Left ventricle myocardium inferior (tissue), 1 donor: ENCODE measurements at regions of chr2 and their contacts with region 1.

Region 1: DNA sequence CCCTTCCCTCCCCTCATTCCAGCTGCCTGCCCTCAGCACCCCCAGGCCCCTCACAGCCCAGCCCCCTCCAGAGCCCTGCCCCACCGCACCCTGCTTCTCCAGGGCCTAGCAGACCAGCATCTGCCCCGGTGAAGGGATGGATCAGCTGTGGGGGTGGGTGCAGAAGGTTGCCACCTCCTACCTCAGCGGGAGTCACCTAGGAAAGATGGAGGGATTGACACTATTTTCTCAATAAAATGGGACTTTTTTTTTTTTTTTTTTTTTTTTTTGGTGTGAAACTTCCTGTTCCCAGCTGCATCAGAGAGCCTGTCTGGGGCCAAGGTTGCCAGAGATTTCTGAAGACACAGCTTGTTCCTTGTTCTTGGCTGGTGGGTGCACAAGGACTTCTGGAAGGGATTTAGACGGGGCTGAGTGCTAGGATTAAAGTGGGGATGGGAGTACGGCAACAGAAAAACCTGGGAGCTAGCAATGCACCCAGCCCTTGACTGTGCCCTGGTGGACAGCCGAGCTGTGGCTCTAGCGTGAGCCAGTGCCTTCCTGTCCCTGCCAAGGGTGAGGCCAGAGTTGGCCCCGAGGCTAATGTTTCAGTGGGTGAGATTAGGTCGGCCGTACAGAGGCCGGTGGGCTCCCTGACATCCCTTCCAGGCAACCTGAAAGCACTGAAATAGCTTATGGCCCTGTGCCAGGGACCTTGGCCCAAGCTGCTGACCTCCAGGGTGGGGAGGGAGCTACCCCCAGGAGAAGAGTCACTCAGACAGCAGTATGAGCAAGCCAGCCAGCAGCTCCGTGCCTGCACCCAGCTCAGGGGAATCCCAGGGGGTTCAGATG is 4.6 kb downstream of the B3GNT7 start:
- DNase-seq: peak; percentile 58
- H3K4me3 ChIP-seq: peak overlapping the region; percentile 23
- H3K27ac ChIP-seq: peak overlapping the region; percentile 80
- H3K4me1 ChIP-seq: peaks cover 43% of the 10 kb centered on the region
- H3K27me3 ChIP-seq: peaks cover 16% of the 10 kb centered on the region
- CTCF ChIP-seq: peak; percentile 55

Region 2: DNA sequence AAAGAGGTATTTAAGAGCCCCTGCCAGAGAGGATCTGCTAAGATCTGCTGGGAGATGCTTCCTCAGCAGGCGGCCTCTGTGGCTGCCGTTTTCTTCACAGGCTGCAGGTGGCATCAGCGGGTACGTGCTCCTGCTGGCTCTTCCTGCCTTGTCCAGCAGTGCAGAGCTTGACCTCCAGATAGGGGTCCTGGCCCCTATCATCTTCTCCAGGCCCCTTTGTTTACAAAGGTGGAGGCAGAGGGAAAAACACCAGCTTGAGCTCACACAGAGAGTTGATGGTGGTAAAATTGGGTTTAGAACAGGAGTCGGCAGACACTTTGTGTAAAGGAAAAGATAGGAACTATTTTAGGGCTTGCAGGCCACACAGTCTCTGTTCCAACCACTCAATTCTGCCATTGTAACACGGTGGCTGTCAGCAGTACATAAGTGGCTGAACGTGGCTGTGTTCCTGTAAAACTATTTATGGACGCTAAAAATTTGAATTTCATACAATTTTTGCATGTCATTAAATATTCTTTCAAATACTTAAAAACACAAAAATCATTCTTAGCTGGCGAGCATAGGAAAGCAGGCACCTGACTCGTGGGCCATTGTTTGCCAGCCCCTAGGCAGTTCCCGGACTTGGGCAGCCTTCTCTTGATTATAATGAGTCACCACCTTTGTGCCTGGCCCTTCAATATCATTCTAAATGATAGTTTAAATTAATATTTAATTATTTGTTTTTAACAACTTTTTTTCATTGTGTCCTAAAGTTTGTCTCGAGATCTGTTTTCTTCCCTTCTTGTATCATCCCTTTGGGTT is 102.8 kb before region 1 on chr2:
- intact Hi-C with region 1: loop called (anchors 10 kb)
- DNase-seq: peak; percentile 53
- H3K4me3 ChIP-seq: no peak overlapping the region
- H3K27ac ChIP-seq: peak overlapping the region; percentile 54
- H3K4me1 ChIP-seq: peaks cover 43% of the 10 kb centered on the region
- H3K27me3 ChIP-seq: no peaks in the 10 kb centered on the region
- CTCF ChIP-seq: peak; percentile 78

Region 3: GRCh38 chr2:231308631-231309428 is 91.2 kb before region 1 on chr2:
- intact Hi-C with region 1: no loop called
- DNase-seq: no peak
- H3K4me3 ChIP-seq: no peak overlapping the region
- H3K27ac ChIP-seq: no peak overlapping the region
- H3K4me1 ChIP-seq: no peaks in the 10 kb centered on the region
- H3K27me3 ChIP-seq: no peaks in the 10 kb centered on the region
- CTCF ChIP-seq: no peak